ENCODE measurements at regions of chr6 and their contacts with region 1.

Region 1: DNA sequence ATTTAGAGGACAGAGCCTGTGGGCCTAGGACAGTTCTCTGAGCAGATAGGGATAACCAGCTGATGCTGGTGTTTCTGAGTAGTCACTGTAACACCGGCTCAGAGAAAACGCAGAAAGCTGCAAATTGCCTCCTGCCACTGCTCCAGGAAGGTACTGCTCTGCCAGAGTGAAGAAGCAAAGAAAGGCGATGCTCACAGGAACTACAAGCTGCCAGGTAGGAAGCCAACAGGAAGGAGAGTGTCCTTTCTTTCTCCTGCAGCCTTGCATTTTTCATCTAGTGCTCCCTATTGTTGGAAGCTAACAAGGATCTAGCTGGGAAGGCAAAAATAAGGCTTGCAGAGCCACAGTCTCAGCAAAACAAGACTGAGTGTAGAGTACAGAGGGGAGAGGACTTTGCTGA is 70.7 kb upstream of the RAB32 start:
- DNase-seq: no peak
- H3K4me3 ChIP-seq: no peak overlapping the region
- H3K27ac ChIP-seq: no peak overlapping the region
- H3K4me1 ChIP-seq: no peaks in the 10 kb centered on the region
- CTCF ChIP-seq: no peak

Region 2: DNA sequence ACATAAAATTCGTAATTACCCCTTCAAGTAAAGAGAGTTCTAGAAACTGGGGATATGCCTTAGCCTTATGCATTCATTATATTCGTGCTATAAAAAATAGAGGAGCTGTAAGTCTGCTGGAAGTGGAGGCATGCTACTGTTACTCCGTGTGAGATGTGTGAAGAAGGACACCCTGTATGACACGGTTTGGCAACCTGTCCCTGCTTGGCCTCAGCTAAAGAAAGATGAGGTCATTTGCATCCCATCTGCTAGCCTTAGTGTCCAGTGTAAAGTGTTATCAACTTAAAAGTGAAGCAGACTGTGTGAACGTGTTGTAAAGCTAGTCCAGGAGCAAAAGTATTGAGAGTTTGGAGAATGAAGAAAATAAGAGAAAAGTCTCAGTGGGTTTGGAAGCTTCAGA is 64.3 kb before region 1 on chr6:
- CTCF ChIA-PET with region 1: no interaction called
- POLR2A ChIA-PET with region 1: no interaction called
- intact Hi-C with region 1: loop called (anchors 2 kb)
- DNase-seq: no peak
- H3K4me3 ChIP-seq: no peak overlapping the region
- H3K27ac ChIP-seq: no peak overlapping the region
- H3K4me1 ChIP-seq: no peaks in the 10 kb centered on the region
- CTCF ChIP-seq: no peak

Region 3: DNA sequence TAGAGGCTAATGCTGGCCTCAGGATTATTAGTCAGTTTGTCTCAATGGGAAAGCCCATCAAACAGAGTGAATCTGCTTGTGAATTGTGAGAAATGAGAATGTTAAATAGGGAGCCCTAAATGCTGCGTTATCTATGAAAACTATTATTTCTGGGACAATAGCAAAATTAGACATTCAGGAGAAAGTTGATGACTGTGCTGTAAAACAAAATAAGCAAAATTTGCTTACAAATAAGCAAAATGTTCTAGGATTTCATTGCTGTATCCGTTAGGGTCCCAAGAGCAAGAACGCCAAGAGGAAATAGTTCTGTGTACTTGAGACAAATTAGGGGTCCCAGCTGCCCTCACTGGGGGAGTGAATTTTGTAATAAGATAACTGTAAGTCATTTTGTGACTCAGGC is 11.5 kb after region 1 on chr6:
- CTCF ChIA-PET with region 1: no interaction called
- POLR2A ChIA-PET with region 1: no interaction called
- intact Hi-C with region 1: no loop called
- DNase-seq: no peak
- H3K4me3 ChIP-seq: no peak overlapping the region
- H3K27ac ChIP-seq: no peak overlapping the region
- H3K4me1 ChIP-seq: no peaks in the 10 kb centered on the region
- CTCF ChIP-seq: no peak

Measured in OCI-LY7 (cell line).